ENCODE measurements at regions of chr2 and their contacts with region 1.

Region 1: DNA sequence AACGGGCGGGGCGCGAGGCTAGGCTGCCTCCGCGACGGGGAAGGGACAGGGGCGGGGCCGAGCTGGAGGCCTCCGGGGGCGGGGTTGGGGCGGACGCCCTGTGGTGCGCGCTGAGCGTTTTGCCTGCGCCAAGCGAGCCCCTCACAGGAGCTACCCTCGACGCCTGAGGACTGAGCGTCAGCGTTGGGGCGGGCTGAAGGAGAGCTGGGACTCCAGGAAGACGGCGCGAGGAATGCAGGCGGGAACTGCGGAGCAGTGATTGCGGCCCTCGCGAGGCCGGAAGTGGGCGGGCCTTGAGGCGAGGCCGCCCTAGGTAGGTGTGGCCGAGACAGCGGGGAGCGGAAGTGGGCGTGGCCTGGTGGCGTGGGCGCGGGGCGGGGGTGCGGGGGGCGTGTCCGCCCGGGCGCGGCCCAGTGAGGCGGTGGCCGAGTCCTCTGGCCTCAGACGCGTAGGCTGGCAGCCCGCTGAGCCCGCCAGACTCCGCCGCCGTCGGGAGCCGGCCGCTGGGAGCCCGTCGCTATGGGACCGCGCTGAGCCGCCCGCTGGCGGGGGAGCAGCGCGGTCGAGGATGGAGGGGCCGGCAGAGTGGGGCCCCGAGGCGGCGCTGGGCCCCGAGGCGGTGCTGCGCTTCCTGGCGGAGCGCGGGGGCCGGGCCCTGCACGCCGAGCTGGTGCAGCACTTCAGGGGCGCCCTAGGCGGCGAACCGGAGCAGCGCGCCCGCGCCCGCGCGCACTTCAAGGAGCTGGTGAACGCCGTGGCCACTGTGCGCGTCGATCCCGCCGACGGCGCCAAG is at the starts of genes SEPTIN10 and SOWAHC:
- DNase-seq: peak; percentile 98
- H3K4me3 ChIP-seq: peak within 1 kb of the TSS; percentile 67 to 91 (median 80)
- H3K27ac ChIP-seq: peak within 1 kb of the TSS; percentile 94 to 100 (median 98)
- H3K4me1 ChIP-seq: peaks cover 49 to 76% (median 72%) of the 10 kb centered on the region in 4 donors
- H3K27me3 ChIP-seq: no peaks in the 10 kb centered on the region
- CTCF ChIP-seq: no peak
- EP300 ChIP-seq: no peak
- POLR2A ChIP-seq: peak; percentile 65
- total RNA-seq, gene SEPTIN10: 133 to 203 (median 159) TPM
- total RNA-seq, gene SOWAHC: 24.1 to 56.8 (median 43.3) TPM

Region 2: DNA sequence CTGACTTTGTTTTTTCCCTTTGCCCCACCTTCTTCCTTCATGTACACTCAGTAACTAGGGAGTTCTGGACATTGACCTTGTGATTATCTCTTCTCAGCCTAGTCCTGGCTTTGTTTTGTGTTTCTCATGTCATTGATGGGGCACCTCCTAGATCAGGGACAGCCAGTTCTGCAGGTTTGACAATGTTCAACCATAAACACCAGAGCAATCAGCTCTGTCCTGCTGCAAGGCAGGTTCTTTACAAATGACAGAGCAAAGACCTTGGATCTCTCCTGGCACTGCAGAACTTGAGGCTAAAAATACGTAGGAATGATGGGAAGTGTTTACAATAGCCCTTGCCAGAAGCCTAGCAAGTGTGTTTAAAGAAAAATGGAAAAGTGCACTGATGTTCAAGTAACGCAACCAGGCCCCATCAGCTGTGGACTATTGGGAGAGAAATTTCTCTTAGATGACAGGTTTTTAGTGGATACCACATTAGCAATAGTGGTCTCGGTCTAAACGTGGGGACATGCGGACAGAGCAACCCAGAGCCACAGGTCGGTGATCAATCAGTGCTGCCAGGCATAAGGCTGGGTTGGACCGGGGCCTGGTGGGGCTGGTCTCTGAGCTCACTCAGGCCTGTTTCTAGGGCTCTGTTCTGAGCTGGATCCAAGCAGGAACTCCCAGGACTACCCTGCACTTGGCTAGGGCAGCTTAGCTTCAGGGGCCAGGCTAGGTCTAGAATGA is 76.9 kb after region 1 on chr2:
- intact Hi-C with region 1: loop called (anchors 5 kb)
- DNase-seq: no peak
- H3K4me3 ChIP-seq: no peak overlapping the region
- H3K27ac ChIP-seq: peak overlapping the region; percentile 85 to 90 (median 87)
- H3K4me1 ChIP-seq: peaks cover 48 to 88% (median 86%) of the 10 kb centered on the region in 4 donors
- H3K27me3 ChIP-seq: no peaks in the 10 kb centered on the region
- CTCF ChIP-seq: no peak
- EP300 ChIP-seq: peak; percentile 50
- POLR2A ChIP-seq: no peak